Activated naive CD4-positive, alpha-beta T cell treated with anti-CD3 and anti-CD28 coated beads for 36 hours (primary cell): ENCODE measurements at regions of chr19 and their contacts with region 1.

Region 1: GRCh38 chr19:43519436-43520088 is 7.4 kb downstream of the ETHE1 start:
- DNase-seq: peak; percentile 89
- H3K4me3 Mint-ChIP-seq: no peak overlapping the region
- H3K27ac Mint-ChIP-seq: peak overlapping the region; percentile 48
- H3K4me1 Mint-ChIP-seq: peaks cover 12% of the 10 kb centered on the region
- H3K27me3 Mint-ChIP-seq: no peaks in the 10 kb centered on the region

Region 2: GRCh38 chr19:43101950-43102349 is 417.6 kb before region 1 on chr19:
- CTCF ChIA-PET with region 1: no interaction called
- intact Hi-C with region 1: no loop called
- DNase-seq: no peak
- H3K4me3 Mint-ChIP-seq: no peak overlapping the region
- H3K27ac Mint-ChIP-seq: no peak overlapping the region
- H3K4me1 Mint-ChIP-seq: no peaks in the 10 kb centered on the region
- H3K27me3 Mint-ChIP-seq: peaks cover 4% of the 10 kb centered on the region

Region 3: DNA sequence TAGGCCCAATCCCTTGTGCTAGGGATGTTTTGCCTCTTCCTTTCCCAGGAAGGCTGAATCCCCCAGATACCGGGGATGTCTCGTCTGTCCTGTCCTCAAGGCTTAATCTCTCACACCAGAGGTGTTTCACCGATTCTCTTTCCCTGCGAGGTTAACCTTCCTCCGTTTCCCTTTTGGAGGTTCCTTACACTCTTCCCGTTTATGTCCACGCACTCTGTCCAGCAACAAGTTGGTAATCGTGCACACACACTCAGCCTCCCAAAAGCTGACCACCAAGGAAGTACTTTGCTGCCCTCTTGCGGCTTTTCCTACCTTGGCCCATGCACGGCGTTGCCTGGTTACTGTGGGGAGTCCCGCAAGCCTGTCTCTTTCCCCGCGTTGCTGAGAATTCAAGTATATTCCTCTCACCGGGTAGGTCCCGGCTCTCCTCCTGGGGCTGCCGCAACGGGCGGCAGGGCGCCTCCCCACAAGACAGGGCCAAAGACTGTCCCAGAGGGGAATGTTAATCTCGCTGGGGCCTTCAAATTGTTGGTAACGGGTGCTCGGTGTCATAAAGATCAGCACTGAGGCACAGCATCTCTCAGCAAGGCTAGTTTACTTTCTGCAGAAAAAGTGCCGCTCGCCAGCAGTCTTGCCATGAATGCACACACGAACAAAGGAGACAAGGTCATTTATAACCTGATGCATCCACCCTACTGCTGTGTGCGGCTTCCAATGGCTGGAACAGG is 202.8 kb before region 1 on chr19:
- CTCF ChIA-PET with region 1: no interaction called
- intact Hi-C with region 1: no loop called
- DNase-seq: no peak
- H3K4me3 Mint-ChIP-seq: no peak overlapping the region
- H3K27ac Mint-ChIP-seq: no peak overlapping the region
- H3K4me1 Mint-ChIP-seq: no peaks in the 10 kb centered on the region
- H3K27me3 Mint-ChIP-seq: peaks cover 4% of the 10 kb centered on the region

Region 4: DNA sequence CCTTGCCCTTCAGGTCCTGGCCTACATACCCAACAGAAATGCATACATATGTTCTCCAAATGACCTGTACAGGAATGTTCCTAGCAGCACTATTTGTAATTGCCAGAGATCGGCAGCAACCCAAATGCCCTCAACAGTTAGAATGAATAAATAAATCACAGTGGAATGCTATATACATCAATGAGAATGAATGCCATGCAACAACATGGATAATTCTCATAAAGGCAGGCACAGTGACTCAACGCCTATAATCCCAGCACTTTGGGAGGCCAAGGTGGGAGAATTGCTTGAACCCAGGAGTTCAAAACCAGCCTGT is 86.2 kb before region 1 on chr19:
- CTCF ChIA-PET with region 1: interaction called, 54 read pairs
- intact Hi-C with region 1: loop called (anchors 1 kb)
- DNase-seq: no peak
- H3K4me3 Mint-ChIP-seq: no peak overlapping the region
- H3K27ac Mint-ChIP-seq: no peak overlapping the region
- H3K4me1 Mint-ChIP-seq: peaks cover 32% of the 10 kb centered on the region
- H3K27me3 Mint-ChIP-seq: no peaks in the 10 kb centered on the region

Region 5: DNA sequence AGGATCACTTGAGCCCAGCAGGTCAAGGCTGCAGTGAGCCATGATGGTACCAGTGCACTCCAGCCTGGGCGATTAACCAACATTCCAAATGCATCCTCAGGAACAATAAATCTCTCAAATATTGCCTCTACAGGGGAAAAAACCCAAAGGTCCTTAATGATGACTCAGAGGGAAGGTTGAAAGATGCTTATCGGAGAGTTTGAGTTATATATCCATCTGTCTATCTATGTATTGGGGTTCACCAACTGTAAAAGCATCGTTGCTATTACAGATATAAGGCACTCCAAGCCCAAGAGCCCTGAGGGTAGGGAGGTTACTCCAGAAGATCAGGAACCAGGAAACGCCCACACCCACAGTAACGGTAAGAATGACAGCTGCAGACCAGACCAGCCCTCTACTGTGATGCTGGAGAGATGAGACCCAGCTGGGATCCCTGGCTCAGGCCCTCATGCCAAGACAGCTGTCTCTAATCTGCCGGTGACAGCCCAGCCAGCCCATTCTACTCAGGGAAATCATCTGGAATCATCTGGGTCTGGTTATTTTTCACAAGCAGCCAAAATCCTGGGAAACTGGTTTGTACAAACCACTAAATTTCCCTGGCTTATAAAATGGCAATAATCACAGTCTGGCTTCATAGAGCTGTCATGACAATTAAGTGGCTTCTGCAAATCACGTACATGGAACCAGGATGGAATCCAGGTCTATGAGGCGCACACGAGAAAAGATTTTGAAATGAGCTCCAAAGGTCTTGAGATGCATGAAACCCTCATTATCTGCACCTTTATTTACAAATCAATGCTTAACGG is 81.1 kb before region 1 on chr19:
- CTCF ChIA-PET with region 1: interaction called, 230 read pairs
- intact Hi-C with region 1: loop called (anchors 1 kb)
- DNase-seq: peak; percentile 43
- H3K4me3 Mint-ChIP-seq: no peak overlapping the region
- H3K27ac Mint-ChIP-seq: peak overlapping the region; percentile 51
- H3K4me1 Mint-ChIP-seq: peaks cover 27% of the 10 kb centered on the region
- H3K27me3 Mint-ChIP-seq: no peaks in the 10 kb centered on the region

Region 6: GRCh38 chr19:43678512-43679261 is 159.1 kb after region 1 on chr19:
- CTCF ChIA-PET with region 1: no interaction called
- intact Hi-C with region 1: no loop called
- DNase-seq: no peak
- H3K4me3 Mint-ChIP-seq: no peak overlapping the region
- H3K27ac Mint-ChIP-seq: no peak overlapping the region
- H3K4me1 Mint-ChIP-seq: peaks cover 14% of the 10 kb centered on the region
- H3K27me3 Mint-ChIP-seq: no peaks in the 10 kb centered on the region